ENCODE measurements at regions of chr19 and their contacts with region 1.

Region 1: DNA sequence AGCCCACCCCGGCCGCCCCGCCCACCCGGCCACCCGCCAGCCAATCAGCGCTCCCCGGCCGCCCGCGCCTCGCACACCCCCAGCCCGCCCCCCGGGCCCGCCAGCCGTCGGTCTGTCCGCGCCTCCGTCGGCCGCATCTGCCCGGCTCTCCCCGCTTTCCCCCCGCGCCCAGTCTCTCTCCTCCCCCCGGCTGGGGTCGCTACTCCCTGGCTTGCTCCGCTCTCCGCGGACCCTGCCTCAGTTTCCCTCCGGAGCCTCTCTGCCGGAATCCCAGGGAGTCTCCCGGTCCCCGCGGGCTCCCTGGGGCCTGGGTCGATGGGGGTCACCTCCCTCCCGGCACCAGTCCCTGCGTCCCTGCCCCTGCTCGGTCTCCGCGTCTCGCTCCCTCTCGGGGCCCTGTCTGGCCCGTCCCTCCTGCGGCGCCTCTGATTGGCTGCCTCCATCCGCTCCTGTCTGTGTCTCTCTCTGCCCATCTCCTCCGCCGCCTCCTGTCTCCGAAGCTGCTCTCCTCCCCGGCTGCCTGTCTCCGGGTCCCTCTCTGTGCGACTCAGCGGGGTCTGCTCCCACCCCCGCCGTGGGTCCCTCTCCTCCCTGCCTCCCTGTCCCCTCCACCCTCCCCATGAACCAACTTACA is 475 bp downstream of the IL11 start:
- DNase-seq: no peak
- H3K4me3 Mint-ChIP-seq: peak overlapping the region; percentile 54
- H3K27ac Mint-ChIP-seq: no peak overlapping the region
- H3K4me1 Mint-ChIP-seq: peaks cover 5% of the 10 kb centered on the region
- H3K27me3 Mint-ChIP-seq: peaks cover 44% of the 10 kb centered on the region

Region 2: DNA sequence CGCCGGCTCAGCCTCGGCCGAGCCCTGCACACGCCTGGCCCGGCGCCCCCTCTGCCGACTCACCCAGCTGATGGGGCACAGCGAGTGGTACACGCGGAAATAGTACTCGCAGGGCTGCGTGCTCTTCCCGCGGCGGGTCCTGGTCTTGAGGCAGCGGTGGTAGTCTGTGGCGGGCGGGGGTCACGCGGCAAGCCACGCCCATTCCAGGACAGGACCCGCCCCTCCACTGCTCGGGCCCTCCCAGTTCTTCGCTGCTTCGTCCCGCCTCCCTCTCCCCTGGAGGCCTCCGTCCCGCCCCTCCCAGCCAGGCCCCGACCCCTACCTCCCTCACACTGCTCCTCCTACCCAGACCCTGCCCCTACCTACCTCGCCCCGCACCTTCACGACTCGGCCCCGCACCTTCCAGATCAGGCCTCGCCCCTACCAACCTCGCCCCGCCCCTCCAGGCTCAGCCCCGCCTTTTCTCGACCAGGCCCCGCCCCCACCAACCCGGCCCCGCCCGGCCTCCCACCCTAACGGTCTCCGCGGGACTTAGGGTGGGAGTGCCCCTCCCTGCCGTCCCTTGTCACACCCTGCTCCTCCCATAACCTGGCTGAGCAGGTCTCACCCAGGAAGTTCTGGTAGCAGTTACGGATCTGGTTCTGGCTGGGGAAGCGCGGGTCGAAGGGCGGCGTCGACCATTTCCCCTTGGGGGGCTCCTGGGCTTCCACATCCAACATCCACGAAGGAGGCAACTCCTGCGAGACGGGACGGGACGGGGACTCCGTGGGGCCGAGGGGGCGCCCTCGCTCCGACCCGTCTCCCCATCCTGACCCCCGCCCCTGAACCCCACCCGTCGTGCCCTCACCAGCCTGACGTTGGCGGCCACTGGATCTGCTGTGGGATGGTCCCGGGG is 15.7 kb before region 1 on chr19:
- intact Hi-C with region 1: loop called (anchors 2 kb)
- DNase-seq: peak; percentile 45
- H3K4me3 Mint-ChIP-seq: peak overlapping the region; percentile 82
- H3K27ac Mint-ChIP-seq: no peak overlapping the region
- H3K4me1 Mint-ChIP-seq: peaks cover 26% of the 10 kb centered on the region
- H3K27me3 Mint-ChIP-seq: peaks cover 44% of the 10 kb centered on the region

Measured in activated T-helper 1 cell treated with anti-CD3 and anti-CD28 coated beads, Interleukin-12 subunit alpha, Interleukin-12 subunit beta, Interleukin-2, Interleukin-4 antibody, amounts not matched to agents 30 ng/mL and 10 ng/mL and 1 ng/mL, durations not matched to agents 14 hours and 24 hours and 36 hours (primary cell).